B cell (primary cell): ENCODE measurements at regions of chr10 and their contacts with region 1.

Region 1: DNA sequence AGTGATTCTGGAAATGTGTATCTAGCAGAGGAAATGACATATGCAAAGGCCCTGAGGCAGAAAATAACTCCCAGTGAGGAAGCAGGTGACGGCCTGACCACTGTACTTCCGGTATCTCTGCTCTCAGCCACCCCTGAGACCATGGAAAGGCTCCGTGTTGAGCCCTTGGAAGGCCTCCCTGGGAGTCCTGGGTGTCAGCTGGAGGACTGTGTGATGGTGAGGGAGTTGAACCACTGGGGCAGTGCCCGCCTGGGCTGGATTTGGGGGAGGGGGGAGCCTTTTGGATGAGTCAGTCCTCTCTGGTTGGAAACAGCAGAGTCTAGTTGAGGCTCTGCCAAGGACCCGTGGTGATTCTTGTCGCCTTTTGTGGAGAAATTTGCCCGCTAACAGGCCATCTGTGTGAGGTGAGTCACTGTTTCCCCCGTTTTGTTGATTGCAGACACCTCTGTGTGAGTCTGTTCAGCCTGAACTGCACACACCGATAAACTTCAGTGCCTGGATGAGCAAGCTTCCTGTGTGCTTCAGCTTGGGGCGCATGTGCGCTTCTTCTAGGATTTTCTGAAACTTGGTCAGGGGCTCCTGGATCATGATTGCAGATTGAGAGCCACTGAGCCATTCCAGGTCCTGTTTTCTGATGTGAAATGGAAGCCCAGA is 98.6 kb downstream of the GRK5 start:
- DNase-seq: peak; percentile 90
- ATAC-seq: peak; percentile 71
- H3K4me3 ChIP-seq: peak overlapping the region; percentile 31 to 62 (median 42)
- H3K4me3 Mint-ChIP-seq: peak overlapping the region; percentile 87
- H3K27ac ChIP-seq: peak overlapping the region; percentile 99
- H3K27ac Mint-ChIP-seq: peak overlapping the region; percentile 99
- H3K4me1 ChIP-seq: peaks cover 97 to 100% of the 10 kb centered on the region in 2 donors
- H3K4me1 Mint-ChIP-seq: peaks cover 95% of the 10 kb centered on the region
- H3K27me3 ChIP-seq: no peaks in the 10 kb centered on the region
- H3K27me3 Mint-ChIP-seq: no peaks in the 10 kb centered on the region
- CTCF ChIP-seq: no peak

Region 2: DNA sequence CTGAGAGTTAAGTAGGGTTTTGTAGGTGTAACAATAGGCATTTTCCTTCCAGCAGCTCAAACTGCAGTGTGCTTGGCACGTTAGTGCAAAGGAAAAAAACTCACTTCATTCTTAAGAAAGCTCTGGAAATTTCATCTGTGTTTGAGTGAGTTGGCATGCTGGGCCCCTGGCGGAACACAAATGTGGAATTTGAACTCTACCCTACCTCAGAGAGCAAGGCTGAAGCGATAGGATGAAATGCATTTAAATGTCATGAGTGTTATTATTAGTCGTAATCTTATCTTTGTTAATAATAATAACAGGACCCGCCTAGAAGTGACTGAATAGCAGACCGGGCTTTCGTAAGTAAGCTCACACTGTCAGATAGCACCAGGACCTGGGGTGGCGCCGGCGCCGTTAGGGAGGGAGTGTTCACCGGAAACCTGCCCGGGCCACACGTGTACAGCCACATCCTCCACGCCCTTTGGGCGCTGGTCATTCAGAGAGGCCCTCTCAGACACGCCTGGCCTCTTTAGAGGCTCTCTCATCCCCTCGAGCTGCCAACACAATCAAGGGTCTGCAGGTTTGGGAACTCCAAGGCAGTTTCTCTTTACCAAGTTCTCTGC is 35.1 kb before region 1 on chr10:
- CTCF ChIA-PET with region 1: interaction called, 16 read pairs
- POLR2A ChIA-PET with region 1: interaction called, 8 read pairs
- intact Hi-C with region 1: loop called (anchors 1 kb)
- DNase-seq: peak; percentile 77
- ATAC-seq: peak; percentile 39
- H3K4me3 ChIP-seq: peak overlapping the region in 4 of 5 experiments; percentile 15 to 42 (median 31)
- H3K4me3 Mint-ChIP-seq: peak overlapping the region; percentile 73
- H3K27ac ChIP-seq: peak overlapping the region; percentile 98 to 99
- H3K27ac Mint-ChIP-seq: peak overlapping the region; percentile 97
- H3K4me1 ChIP-seq: peaks cover 54 to 78% of the 10 kb centered on the region in 2 donors
- H3K4me1 Mint-ChIP-seq: peaks cover 76% of the 10 kb centered on the region
- H3K27me3 ChIP-seq: no peaks in the 10 kb centered on the region
- H3K27me3 Mint-ChIP-seq: no peaks in the 10 kb centered on the region
- CTCF ChIP-seq: no peak

Region 3: GRCh38 chr10:119368991-119369869 is 63.2 kb after region 1 on chr10:
- CTCF ChIA-PET with region 1: interaction called, 5 read pairs
- POLR2A ChIA-PET with region 1: interaction called, 3 read pairs
- intact Hi-C with region 1: loop called (anchors 1 kb)
- DNase-seq: peak; percentile 75
- ATAC-seq: peak; percentile 76
- H3K4me3 ChIP-seq: peak overlapping the region; percentile 18 to 60 (median 55)
- H3K4me3 Mint-ChIP-seq: peak overlapping the region; percentile 90
- H3K27ac ChIP-seq: peak overlapping the region; percentile 73 to 75
- H3K27ac Mint-ChIP-seq: peak overlapping the region; percentile 97
- H3K4me1 ChIP-seq: peaks cover 59 to 62% of the 10 kb centered on the region in 2 donors
- H3K4me1 Mint-ChIP-seq: peaks cover 66% of the 10 kb centered on the region
- H3K27me3 ChIP-seq: no peaks in the 10 kb centered on the region
- H3K27me3 Mint-ChIP-seq: no peaks in the 10 kb centered on the region
- CTCF ChIP-seq: no peak

Region 4: GRCh38 chr10:119416855-119417254 is 110.9 kb after region 1 on chr10:
- CTCF ChIA-PET with region 1: interaction called, 3 read pairs
- POLR2A ChIA-PET with region 1: no interaction called
- intact Hi-C with region 1: loop called (anchors 2 kb)
- DNase-seq: peak; percentile 83
- ATAC-seq: peak; percentile 90
- H3K4me3 ChIP-seq: no peak overlapping the region
- H3K4me3 Mint-ChIP-seq: no peak overlapping the region
- H3K27ac ChIP-seq: no peak overlapping the region
- H3K27ac Mint-ChIP-seq: peak overlapping the region; percentile 62
- H3K4me1 ChIP-seq: peaks cover 0 to 8% of the 10 kb centered on the region in 2 donors
- H3K4me1 Mint-ChIP-seq: peaks cover 6% of the 10 kb centered on the region
- H3K27me3 ChIP-seq: no peaks in the 10 kb centered on the region
- H3K27me3 Mint-ChIP-seq: no peaks in the 10 kb centered on the region
- CTCF ChIP-seq: peak; percentile 88

Region 5: DNA sequence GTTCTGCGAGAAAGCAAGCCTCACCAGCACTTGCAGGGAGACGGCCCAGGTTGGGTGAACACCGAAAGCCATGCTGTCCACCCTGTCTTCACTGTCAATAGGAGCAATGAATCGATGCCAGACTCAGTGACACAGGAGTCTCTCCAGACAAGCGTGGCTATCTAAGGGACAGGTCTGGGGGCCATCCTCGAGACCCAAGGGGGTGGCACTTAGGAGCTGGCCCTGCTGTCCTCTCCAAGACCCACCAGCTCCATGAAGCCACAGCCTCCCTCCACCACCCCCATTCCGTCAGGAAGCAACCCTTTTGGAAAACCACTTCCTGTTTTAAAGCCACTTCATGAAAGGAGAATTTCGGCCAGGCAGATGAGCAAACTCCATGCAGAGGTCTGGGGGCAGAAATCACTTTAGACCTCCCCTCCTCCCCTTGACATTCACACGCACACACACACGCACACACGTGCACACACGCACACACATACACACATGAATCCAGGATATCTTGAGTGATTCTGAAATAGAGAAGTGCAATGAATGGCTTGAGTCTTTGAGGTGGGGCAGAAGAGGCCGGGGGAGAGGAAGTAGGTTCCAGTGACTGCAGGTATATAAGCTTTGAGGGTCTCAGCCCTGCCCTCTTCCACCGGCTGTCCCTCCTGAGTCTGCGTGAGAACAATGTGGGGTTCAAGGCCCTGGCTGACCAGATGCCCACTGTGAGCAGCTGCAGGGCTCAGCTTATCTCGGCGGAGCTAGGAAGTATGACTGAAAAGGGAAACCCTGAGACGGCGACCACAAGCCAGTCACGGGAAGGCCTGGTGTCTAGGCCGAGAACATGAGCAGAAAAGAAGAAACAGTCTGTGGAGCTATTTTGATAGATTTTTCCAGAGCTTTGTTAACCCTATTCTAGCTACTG is 211.5 kb after region 1 on chr10:
- CTCF ChIA-PET with region 1: no interaction called
- POLR2A ChIA-PET with region 1: no interaction called
- intact Hi-C with region 1: loop called (anchors 1 kb)
- DNase-seq: peak; percentile 89
- ATAC-seq: peak; percentile 73
- H3K4me3 ChIP-seq: peak overlapping the region in 3 of 5 experiments; percentile 25 to 51 (median 33)
- H3K4me3 Mint-ChIP-seq: peak overlapping the region; percentile 64
- H3K27ac ChIP-seq: peak overlapping the region; percentile 67 to 95
- H3K27ac Mint-ChIP-seq: peak overlapping the region; percentile 94
- H3K4me1 ChIP-seq: peaks cover 31 to 38% of the 10 kb centered on the region in 2 donors
- H3K4me1 Mint-ChIP-seq: peaks cover 34% of the 10 kb centered on the region
- H3K27me3 ChIP-seq: no peaks in the 10 kb centered on the region
- H3K27me3 Mint-ChIP-seq: no peaks in the 10 kb centered on the region
- CTCF ChIP-seq: no peak

Region 6: DNA sequence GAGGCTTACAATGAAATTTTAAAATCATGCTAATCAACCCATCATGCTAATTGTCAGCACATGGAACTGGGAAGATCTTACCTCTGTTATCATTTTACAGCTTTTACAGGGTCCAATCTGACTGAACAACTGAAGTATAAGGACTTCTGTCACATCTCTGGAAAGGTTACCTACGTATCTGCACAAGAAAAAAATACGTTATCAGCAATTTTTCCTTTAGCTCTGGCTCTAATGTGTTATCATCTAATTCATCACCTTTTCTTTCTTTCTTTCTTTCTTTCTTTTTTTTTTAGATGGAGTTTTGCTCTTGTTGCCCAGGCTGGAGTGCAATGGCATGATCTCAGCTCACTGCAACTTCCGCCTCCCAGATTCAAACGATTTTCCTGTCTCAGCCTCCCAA is 282.1 kb after region 1 on chr10:
- CTCF ChIA-PET with region 1: no interaction called
- POLR2A ChIA-PET with region 1: no interaction called
- intact Hi-C with region 1: no loop called
- DNase-seq: no peak
- ATAC-seq: no peak
- H3K4me3 ChIP-seq: no peak overlapping the region
- H3K4me3 Mint-ChIP-seq: no peak overlapping the region
- H3K27ac ChIP-seq: no peak overlapping the region
- H3K27ac Mint-ChIP-seq: no peak overlapping the region
- H3K4me1 ChIP-seq: peaks cover 6 to 14% of the 10 kb centered on the region in 2 donors
- H3K4me1 Mint-ChIP-seq: peaks cover 24% of the 10 kb centered on the region
- H3K27me3 ChIP-seq: no peaks in the 10 kb centered on the region
- H3K27me3 Mint-ChIP-seq: no peaks in the 10 kb centered on the region
- CTCF ChIP-seq: no peak

Region 7: GRCh38 chr10:119705434-119705831 is 399.4 kb after region 1 on chr10:
- CTCF ChIA-PET with region 1: no interaction called
- POLR2A ChIA-PET with region 1: no interaction called
- intact Hi-C with region 1: loop called (anchors 1 kb)
- DNase-seq: peak; percentile 62
- ATAC-seq: peak; percentile 13
- H3K4me3 ChIP-seq: peak overlapping the region in 3 of 5 experiments; percentile 18 to 46 (median 42)
- H3K4me3 Mint-ChIP-seq: peak overlapping the region; percentile 90
- H3K27ac ChIP-seq: peak overlapping the region; percentile 94
- H3K27ac Mint-ChIP-seq: peak overlapping the region; percentile 98
- H3K4me1 ChIP-seq: peaks cover 93 to 97% of the 10 kb centered on the region in 2 donors
- H3K4me1 Mint-ChIP-seq: peaks cover 81% of the 10 kb centered on the region
- H3K27me3 ChIP-seq: no peaks in the 10 kb centered on the region
- H3K27me3 Mint-ChIP-seq: no peaks in the 10 kb centered on the region
- CTCF ChIP-seq: no peak